ENCODE measurements at regions of chr5 and their contacts with region 1.

Region 1: GRCh38 chr5:114449860-114450421 is 88.1 kb downstream of the KCNN2 start:
- DNase-seq: peak; percentile 63
- ATAC-seq: peak; percentile 99
- H3K4me3 ChIP-seq: no peak overlapping the region
- H3K27ac ChIP-seq: no peak overlapping the region
- H3K4me1 ChIP-seq: no peaks in the 10 kb centered on the region
- H3K27me3 ChIP-seq: peaks cover 27% of the 10 kb centered on the region; the same call in 1 of the 2 replicates
- CTCF ChIP-seq: peak; percentile 88

Region 2: DNA sequence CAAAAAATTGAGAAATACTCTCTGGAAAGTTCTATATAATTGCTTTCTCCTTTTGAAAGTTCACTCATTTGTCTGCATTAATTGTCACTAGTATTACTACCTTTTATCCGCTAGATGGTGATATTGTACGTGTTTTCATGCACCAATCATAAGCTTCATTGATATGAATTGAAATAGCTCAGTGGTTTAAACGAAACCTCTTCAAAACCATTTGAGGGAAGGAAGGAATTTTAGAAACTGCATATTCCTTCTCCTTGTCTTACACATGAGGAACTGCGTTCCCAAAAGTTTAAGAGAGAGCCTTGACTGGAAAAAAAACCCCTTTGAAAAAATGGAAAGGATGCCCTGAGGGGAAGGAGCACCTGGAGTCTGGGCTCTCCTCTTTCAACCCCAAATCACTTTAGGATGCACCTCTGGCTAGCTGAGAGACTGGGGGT is 837.9 kb before region 1 on chr5:
- CTCF ChIA-PET with region 1: interaction called, 15 read pairs
- POLR2A ChIA-PET with region 1: no interaction called
- intact Hi-C with region 1: loop called (anchors 1 kb)
- DNase-seq: peak; percentile 46
- ATAC-seq: peak; percentile 69
- H3K4me3 ChIP-seq: no peak overlapping the region
- H3K27ac ChIP-seq: no peak overlapping the region
- H3K4me1 ChIP-seq: peaks cover 6% of the 10 kb centered on the region
- H3K27me3 ChIP-seq: no peaks in the 10 kb centered on the region; the same call in 1 of the 2 replicates
- CTCF ChIP-seq: peak; percentile 79

Region 3: GRCh38 chr5:113678924-113679575 is 770.9 kb before region 1 on chr5:
- CTCF ChIA-PET with region 1: no interaction called
- POLR2A ChIA-PET with region 1: no interaction called
- intact Hi-C with region 1: loop called (anchors 5 kb)
- DNase-seq: peak; percentile 70
- ATAC-seq: no peak
- H3K4me3 ChIP-seq: no peak overlapping the region
- H3K27ac ChIP-seq: no peak overlapping the region
- H3K4me1 ChIP-seq: no peaks in the 10 kb centered on the region
- H3K27me3 ChIP-seq: peaks cover 7% of the 10 kb centered on the region; the same call in 1 of the 2 replicates
- CTCF ChIP-seq: peak; percentile 68

Region 4: GRCh38 chr5:114402206-114402605 is 47.7 kb before region 1 on chr5:
- CTCF ChIA-PET with region 1: no interaction called
- POLR2A ChIA-PET with region 1: no interaction called
- intact Hi-C with region 1: no loop called
- DNase-seq: no peak
- ATAC-seq: no peak
- H3K4me3 ChIP-seq: no peak overlapping the region
- H3K27ac ChIP-seq: no peak overlapping the region
- H3K4me1 ChIP-seq: no peaks in the 10 kb centered on the region
- H3K27me3 ChIP-seq: peaks cover 11% of the 10 kb centered on the region; the same call in 1 of the 2 replicates
- CTCF ChIP-seq: no peak

Region 5: DNA sequence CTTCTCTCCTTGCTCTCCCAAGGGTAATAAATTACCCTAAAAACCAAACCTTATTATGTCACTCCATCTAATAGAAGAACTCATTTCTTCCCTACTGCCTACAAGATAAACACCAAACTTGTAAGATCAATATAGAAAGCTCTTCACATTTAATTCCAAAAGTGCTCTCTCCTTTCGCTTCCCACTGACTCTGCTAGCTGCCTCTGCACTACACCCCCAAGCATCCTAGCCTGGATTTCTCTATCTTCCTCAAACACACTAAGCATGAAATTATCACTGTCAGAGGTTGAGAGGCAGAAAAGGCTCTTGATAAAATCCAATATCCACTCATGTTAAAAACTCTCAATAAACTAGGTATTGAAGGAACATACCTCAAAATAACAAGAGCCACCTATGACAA is 74.3 kb after region 1 on chr5:
- CTCF ChIA-PET with region 1: no interaction called
- POLR2A ChIA-PET with region 1: no interaction called
- intact Hi-C with region 1: no loop called
- DNase-seq: no peak
- ATAC-seq: no peak
- H3K4me3 ChIP-seq: no peak overlapping the region
- H3K27ac ChIP-seq: no peak overlapping the region
- H3K4me1 ChIP-seq: no peaks in the 10 kb centered on the region
- H3K27me3 ChIP-seq: no peaks in the 10 kb centered on the region
- CTCF ChIP-seq: no peak

Region 6: GRCh38 chr5:114561415-114561814 is 111.5 kb after region 1 on chr5:
- CTCF ChIA-PET with region 1: no interaction called
- POLR2A ChIA-PET with region 1: no interaction called
- intact Hi-C with region 1: no loop called
- DNase-seq: no peak
- ATAC-seq: no peak
- H3K4me3 ChIP-seq: no peak overlapping the region
- H3K27ac ChIP-seq: no peak overlapping the region
- H3K4me1 ChIP-seq: no peaks in the 10 kb centered on the region
- H3K27me3 ChIP-seq: no peaks in the 10 kb centered on the region
- CTCF ChIP-seq: no peak

Region 7: DNA sequence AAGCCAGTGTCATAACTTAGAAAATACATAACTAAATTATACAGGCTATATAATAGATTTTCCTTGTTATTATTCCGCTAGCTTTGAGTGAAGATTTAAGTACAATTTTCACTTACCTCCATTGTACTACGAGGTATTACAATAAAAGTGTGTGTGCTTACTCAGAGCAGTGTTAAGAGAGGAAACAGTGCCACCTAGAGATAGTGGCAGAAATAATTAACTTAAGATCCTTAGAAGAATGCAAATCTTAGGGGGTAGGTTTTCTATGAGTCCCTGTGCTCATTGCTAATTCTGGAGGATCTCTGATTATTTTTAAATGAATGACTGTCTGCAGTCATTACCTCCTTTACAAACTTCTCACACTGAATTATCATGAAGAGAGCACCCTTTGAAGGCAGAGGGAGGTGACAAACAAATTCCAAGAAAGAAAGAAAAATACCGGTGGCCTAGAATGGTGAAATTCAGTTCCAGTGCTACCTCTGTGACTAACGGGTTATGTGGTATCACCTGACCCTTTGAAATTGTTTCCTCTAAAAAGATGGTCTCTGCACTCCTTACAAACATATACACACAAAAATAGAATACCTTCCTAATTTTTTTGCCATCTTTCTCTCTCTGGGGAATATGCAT is 339.9 kb after region 1 on chr5:
- CTCF ChIA-PET with region 1: no interaction called
- POLR2A ChIA-PET with region 1: no interaction called
- intact Hi-C with region 1: loop called (anchors 2 kb)
- DNase-seq: peak; percentile 51
- ATAC-seq: peak; percentile 53; the same call in 1 of the 2 replicates
- H3K4me3 ChIP-seq: no peak overlapping the region
- H3K27ac ChIP-seq: no peak overlapping the region
- H3K4me1 ChIP-seq: no peaks in the 10 kb centered on the region
- H3K27me3 ChIP-seq: no peaks in the 10 kb centered on the region; the same call in 1 of the 2 replicates
- CTCF ChIP-seq: peak; percentile 65

Measured in PC-3 (cell line).